ENCODE measurements at regions of chr9 and their contacts with region 1.

Region 1: DNA sequence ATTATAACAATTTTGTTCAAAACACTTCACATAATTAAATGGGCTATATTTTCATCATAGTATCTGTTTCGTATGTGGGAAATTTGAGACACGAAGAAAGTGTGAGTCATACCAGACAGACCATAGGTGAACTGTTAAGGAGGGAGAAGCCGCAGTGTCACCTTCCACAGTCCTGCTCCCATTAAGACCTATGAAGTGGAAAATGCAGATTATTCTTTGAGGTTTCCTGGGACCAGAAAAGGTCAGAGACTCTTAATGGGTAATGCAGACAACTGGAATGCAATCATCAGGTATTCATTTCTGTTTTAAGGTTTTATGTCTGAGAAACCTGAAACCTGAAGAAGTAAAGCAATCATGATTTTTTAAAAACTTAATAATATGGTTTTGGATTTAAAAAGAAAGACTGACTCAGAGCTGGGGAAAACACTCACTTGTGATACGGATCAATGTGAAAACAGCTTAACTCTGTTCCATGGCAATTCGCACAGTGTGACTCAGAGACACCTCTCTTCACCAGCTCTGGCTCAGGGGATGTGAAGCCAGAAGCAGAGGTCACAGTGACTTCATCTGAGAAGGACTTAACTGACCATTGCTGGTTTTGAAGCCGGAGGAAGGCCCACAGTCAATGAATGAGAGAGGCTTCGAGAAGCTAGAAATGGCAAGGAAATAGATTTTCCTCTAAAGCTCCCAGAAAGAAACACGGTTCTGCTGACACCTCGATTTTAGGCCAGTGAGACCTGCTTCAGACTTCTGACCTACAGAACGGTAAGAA is 17.2 kb upstream of the GCNT1 start:
- DNase-seq: no peak
- H3K4me3 ChIP-seq: no peak overlapping the region
- H3K27ac ChIP-seq: no peak overlapping the region
- H3K4me1 ChIP-seq: no peaks in the 10 kb centered on the region
- H3K27me3 ChIP-seq: no peaks in the 10 kb centered on the region
- CTCF ChIP-seq: no peak
- POLR2A ChIP-seq: no peak

Region 2: GRCh38 chr9:76116913-76117312 is 324.8 kb before region 1 on chr9:
- intact Hi-C with region 1: no loop called
- DNase-seq: no peak
- H3K4me3 ChIP-seq: no peak overlapping the region
- H3K27ac ChIP-seq: no peak overlapping the region
- H3K4me1 ChIP-seq: no peaks in the 10 kb centered on the region
- H3K27me3 ChIP-seq: no peaks in the 10 kb centered on the region
- CTCF ChIP-seq: no peak
- POLR2A ChIP-seq: no peak

Region 3: DNA sequence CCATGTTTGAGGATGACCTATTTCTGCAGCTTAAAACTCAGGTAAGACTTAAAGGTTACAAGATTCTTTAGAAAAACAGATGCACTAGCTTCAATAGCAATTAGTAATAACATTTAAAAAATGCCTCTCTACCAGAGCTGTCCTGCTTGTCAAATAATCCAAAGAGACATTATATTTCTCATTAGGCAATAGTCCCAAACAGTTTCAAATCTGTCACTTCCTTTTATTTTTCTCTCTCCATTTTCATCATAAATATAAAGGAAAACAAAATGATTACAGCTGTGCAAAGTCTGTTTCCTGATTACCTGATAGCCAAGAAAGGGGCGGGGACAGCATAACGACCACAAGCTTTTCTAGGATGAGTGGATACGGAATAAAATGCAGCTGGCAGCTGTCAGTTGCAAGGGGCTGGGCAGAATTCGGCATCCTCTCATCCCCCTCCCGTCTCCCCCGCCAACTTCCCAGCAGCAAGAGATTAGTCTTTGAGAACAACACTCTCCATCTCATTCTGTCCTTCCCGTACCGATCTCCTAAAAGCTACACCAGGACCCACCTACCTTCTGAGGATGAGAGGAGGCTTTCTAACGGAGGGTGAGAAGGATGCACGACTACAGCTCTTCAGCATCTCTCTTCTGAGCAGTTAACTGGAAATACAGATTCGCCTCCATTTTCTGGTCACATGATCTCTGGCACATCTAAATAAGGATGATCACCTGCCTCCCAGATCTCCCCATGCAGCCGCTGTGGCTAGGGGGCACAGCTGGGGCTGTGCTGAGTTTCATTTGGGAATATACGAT is 250.0 kb after region 1 on chr9:
- intact Hi-C with region 1: no loop called
- DNase-seq: no peak
- H3K4me3 ChIP-seq: no peak overlapping the region
- H3K27ac ChIP-seq: no peak overlapping the region
- H3K4me1 ChIP-seq: no peaks in the 10 kb centered on the region
- H3K27me3 ChIP-seq: no peaks in the 10 kb centered on the region
- CTCF ChIP-seq: no peak
- POLR2A ChIP-seq: no peak

Region 4: DNA sequence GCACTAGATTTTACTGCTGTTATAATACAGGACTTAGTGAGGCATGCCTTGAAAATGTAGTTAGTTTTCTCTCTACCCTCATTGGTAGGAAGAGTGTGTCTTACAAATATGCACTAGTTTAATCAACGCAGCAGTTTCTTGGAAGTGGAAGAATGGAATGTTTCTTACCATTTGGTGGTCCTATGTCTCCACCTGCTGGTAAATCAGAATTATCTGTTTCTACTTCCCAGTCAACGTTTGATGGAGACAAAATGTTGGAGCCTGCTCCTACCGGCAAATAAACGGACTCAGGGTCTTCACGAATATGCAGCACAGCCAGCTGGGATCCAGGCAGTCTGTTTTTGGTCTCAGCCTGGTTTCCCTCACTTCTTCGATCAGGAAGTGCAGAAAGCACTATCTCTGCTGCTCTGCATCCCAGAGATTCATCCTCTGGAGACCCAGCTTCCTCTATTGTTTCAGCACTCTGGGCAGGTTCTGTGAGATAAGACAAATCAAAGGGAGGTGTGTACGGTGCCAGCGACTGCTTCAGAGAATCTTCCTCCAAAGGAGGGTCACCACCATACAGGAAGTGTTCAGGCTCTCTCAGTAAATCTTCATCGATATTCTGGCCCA is 263.0 kb after region 1 on chr9:
- intact Hi-C with region 1: loop called (anchors 2 kb)
- DNase-seq: peak; percentile 23
- H3K4me3 ChIP-seq: no peak overlapping the region
- H3K27ac ChIP-seq: no peak overlapping the region
- H3K4me1 ChIP-seq: no peaks in the 10 kb centered on the region
- H3K27me3 ChIP-seq: no peaks in the 10 kb centered on the region
- CTCF ChIP-seq: peak in 3 of 4 experiments; percentile 68 to 80 (median 80)
- POLR2A ChIP-seq: no peak

Region 5: GRCh38 chr9:76996700-76997099 is 555.0 kb after region 1 on chr9:
- intact Hi-C with region 1: loop called (anchors 10 kb)
- DNase-seq: no peak
- H3K4me3 ChIP-seq: no peak overlapping the region
- H3K27ac ChIP-seq: no peak overlapping the region
- H3K4me1 ChIP-seq: no peaks in the 10 kb centered on the region
- H3K27me3 ChIP-seq: no peaks in the 10 kb centered on the region
- CTCF ChIP-seq: peak in 3 of 4 experiments; percentile 38 to 53 (median 45)
- POLR2A ChIP-seq: no peak

Region 6: GRCh38 chr9:77149879-77150278 is 708.1 kb after region 1 on chr9:
- intact Hi-C with region 1: loop called (anchors 5 kb)
- DNase-seq: no peak
- H3K4me3 ChIP-seq: no peak overlapping the region
- H3K27ac ChIP-seq: no peak overlapping the region
- H3K4me1 ChIP-seq: no peaks in the 10 kb centered on the region
- H3K27me3 ChIP-seq: no peaks in the 10 kb centered on the region
- CTCF ChIP-seq: no peak
- POLR2A ChIP-seq: no peak